HEK293T (cell line): ENCODE measurements at regions of chr12 and their contacts with region 1.

Region 1: GRCh38 chr12:57904848-57905811 is 36.2 kb upstream of the ATP23 start:
- DNase-seq: peak; percentile 87

Region 2: DNA sequence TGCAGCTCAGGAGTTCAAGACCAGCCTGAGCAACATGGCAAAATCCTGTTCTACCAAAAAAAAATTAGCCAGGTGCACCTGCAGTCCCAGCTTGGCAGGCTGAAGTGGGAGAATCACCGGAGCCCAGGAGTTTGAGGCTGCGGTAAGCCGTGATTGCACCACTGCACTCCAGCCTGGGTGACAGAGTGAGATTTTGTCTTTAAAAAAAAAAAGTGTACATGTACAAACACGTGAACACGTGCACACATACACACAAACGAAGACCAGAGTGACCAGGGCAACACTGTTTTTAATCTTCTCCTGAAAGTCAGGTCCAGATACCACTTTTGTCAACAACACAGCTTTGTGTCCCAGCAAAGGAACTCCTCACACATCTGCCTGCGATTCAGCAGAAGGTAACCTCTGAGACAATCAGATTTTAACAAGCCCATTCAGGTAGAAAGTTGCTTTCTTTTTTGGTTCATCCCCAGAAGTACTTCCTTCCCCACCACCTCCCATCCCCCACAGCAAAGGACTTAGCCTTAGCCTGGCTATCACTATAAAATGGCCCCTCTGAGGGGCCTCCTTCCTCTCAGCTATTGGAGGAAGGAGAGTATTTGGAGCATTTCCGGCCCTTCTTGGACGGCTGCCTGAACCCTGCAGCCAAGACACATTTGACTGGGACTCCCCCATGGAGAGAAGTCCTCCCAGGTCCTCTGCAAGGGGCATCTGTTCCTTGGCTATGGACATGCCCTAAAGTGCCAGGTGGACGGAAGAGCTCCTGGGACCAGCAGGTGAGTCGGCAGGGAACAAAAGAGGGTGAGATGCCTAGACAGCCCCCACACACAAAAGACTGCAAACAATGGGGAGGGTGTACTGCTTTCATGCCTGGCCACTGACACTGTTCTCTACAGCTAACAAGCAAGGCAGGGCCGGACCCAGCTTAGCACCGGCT is 68.4 kb before region 1 on chr12:
- CTCF ChIA-PET with region 1: interaction called, 17 read pairs
- POLR2A ChIA-PET with region 1: no interaction called
- DNase-seq: peak; percentile 42

Region 3: DNA sequence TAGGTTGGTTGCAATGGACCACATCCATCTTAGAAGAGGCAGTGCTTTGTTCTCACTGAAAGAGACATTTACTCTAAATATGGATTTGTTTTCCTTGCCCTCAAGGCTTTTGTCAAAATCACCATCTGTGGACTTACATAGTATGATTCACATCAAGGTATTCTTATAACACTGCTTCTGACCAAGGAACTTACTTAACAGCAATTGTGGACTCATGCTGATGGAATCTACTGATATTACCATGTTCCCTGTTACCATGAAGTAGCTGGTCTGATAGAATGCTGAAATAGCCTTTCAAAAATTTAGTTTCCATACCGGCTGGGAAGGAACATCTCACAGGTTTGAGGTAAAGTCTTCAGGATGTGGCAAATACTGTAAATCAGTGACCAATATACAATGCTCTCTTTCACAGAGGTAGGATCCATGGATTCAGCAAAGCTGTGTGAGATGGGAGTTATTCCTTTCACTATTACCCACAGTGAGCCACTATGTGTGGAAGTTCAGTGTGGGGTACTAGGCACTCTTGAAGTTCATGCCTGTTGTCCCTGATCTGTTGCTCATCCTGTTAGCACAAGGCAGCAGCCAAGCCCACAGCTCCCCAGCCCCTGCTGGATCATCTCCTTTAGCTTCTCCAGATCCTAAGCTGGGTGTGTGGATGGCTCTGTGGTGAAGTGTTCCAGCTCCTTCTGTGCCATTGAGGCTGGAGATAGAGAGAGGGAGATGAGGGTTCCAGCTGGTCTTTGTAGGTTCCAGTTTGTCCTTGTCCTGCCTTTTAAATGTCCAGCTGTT is 162.7 kb after region 1 on chr12:
- CTCF ChIA-PET with region 1: no interaction called
- POLR2A ChIA-PET with region 1: no interaction called
- DNase-seq: no peak